HCT116 (cell line): ENCODE measurements at regions of chr2 and their contacts with region 1.

Region 1: GRCh38 chr2:98731041-98731893 is at the start of gene MGAT4A:
- DNase-seq: no peak
- ATAC-seq: peak; percentile 89
- H3K4me3 ChIP-seq: peak within 1 kb of the TSS; percentile 54 to 66
- H3K27ac ChIP-seq: peak within 1 kb of the TSS; percentile 51; the same call in 1 of the 2 replicates
- H3K4me1 ChIP-seq: peaks cover 0 to 11% of the 10 kb centered on the region in 2 experiments; a peak in 1 of 4 replicates
- H3K27me3 ChIP-seq: no peaks in the 10 kb centered on the region
- CTCF ChIP-seq: no peak
- POLR2A ChIP-seq: no peak
- RAD21 ChIP-seq: no peak
- total RNA-seq, gene MGAT4A: 10.2 TPM

Region 2: GRCh38 chr2:98669675-98670074 is 61.6 kb before region 1 on chr2:
- CTCF ChIA-PET with region 1: no interaction called
- POLR2A ChIA-PET with region 1: no interaction called
- RAD21 ChIA-PET with region 1: no interaction called
- intact Hi-C with region 1: no loop called
- DNase-seq: no peak
- ATAC-seq: no peak
- H3K4me3 ChIP-seq: no peak overlapping the region
- H3K27ac ChIP-seq: no peak overlapping the region
- H3K4me1 ChIP-seq: no peaks in the 10 kb centered on the region
- H3K27me3 ChIP-seq: no peaks in the 10 kb centered on the region
- CTCF ChIP-seq: no peak
- POLR2A ChIP-seq: no peak
- RAD21 ChIP-seq: no peak

Region 3: DNA sequence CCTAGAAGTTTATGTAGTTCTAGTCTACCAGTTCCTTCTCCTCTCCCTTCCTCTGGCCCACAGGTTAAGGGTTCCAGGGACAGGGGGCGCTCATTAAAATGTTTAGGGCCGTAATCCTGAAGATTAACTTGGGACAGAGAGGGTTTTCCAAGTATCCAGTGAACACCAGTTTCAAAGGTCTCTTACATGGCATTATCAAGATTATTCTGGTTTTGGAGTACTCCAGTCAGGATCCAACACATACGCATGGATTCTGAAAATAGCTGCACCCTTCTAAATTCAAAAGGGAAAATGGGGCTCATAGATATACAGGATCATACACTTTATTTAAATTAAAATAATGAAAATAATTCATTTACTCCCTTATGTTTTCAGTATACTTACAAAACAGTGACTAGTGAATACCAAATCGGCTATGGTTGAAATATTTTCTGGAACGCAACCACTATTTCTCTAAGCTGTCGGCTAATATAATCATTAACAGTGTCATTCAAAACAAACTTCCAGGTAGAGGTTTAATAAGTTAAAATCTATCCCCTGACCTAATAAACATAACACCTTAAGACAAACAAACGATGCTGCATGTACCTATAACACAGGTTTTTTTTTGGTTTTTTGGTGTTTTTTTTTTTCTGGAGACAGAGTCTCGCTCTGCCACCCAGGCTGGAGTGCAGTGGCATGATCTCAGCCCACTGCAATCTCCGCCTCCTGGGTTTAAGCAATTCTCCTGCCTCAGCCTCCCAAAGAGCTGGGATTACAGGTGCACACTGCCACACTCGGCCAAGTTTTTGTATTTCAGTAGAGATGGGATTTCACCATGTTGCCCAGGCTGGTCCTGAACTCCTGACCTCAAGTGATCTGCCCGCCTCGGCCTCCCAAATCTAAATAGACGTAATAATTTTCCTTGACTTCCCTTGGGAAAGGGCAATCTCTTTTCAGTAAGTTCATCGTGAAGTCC is 45.1 kb before region 1 on chr2:
- CTCF ChIA-PET with region 1: no interaction called
- POLR2A ChIA-PET with region 1: no interaction called
- RAD21 ChIA-PET with region 1: no interaction called
- intact Hi-C with region 1: no loop called
- DNase-seq: no peak
- ATAC-seq: no peak
- H3K4me3 ChIP-seq: no peak overlapping the region
- H3K27ac ChIP-seq: no peak overlapping the region
- H3K4me1 ChIP-seq: no peaks in the 10 kb centered on the region
- H3K27me3 ChIP-seq: no peaks in the 10 kb centered on the region
- CTCF ChIP-seq: no peak
- POLR2A ChIP-seq: no peak
- RAD21 ChIP-seq: no peak

Region 4: DNA sequence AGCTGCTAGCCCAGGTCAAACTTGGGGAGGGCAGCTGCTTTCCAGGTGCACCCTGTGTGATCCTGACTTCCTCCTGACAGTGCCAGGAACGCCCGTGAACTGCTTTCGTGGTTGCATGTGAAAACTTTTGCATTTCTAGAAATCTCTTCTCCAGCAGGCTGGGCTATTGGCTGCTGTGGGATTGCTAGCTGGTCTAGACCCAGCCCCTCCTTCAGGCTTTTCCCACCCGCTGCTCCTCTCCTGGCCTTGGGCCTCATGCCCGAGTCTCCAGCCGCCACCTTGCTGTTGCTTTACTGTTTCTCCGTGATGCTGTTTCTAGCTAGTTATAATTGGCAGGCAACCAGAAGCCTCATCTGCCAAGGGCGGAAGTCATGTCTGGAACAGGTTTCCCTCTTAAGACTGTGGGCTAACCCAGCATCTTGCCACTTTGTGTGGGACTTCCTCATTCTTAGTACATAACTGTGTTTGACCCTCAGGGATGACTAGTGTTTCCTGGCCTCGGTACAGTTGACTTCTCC is 26.7 kb after region 1 on chr2:
- CTCF ChIA-PET with region 1: no interaction called
- POLR2A ChIA-PET with region 1: no interaction called
- RAD21 ChIA-PET with region 1: no interaction called
- intact Hi-C with region 1: loop called (anchors 2 kb)
- DNase-seq: peak; percentile 27
- ATAC-seq: peak; percentile 77
- H3K4me3 ChIP-seq: peak overlapping the region in 1 of 2 experiments; percentile 5; a peak in 1 of 4 replicates
- H3K27ac ChIP-seq: no peak overlapping the region
- H3K4me1 ChIP-seq: peaks cover 0 to 11% of the 10 kb centered on the region in 2 experiments; a peak in 2 of 4 replicates
- H3K27me3 ChIP-seq: no peaks in the 10 kb centered on the region
- CTCF ChIP-seq: no peak
- POLR2A ChIP-seq: no peak
- RAD21 ChIP-seq: no peak; the same call in 1 of the 2 replicates

Region 5: DNA sequence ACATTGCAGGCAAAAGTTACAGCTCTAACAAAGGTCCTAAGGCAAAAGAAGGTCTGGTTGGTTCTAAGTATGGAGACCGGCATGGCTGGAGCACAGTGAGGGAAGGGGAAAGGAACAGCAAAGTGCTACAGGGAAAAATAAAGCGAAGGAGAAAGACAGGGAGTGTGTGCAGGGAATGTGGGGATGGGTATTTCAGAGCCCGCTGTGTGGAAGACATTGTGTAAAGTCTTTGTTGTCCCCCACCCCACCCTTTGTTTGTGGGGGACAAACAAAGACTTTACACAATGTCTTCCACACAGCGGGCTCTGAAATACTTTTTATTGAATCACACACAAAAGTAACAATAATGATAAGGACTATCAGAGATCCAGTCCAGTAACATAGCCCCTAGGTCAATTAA is 381.4 kb after region 1 on chr2:
- CTCF ChIA-PET with region 1: no interaction called
- POLR2A ChIA-PET with region 1: no interaction called
- RAD21 ChIA-PET with region 1: no interaction called
- intact Hi-C with region 1: no loop called
- DNase-seq: no peak
- ATAC-seq: no peak
- H3K4me3 ChIP-seq: no peak overlapping the region
- H3K27ac ChIP-seq: no peak overlapping the region
- H3K4me1 ChIP-seq: no peaks in the 10 kb centered on the region
- H3K27me3 ChIP-seq: no peaks in the 10 kb centered on the region
- CTCF ChIP-seq: no peak
- POLR2A ChIP-seq: no peak
- RAD21 ChIP-seq: no peak